Mammary epithelial cell (primary cell): ENCODE measurements at regions of chr7 and their contacts with region 1.

Region 1: DNA sequence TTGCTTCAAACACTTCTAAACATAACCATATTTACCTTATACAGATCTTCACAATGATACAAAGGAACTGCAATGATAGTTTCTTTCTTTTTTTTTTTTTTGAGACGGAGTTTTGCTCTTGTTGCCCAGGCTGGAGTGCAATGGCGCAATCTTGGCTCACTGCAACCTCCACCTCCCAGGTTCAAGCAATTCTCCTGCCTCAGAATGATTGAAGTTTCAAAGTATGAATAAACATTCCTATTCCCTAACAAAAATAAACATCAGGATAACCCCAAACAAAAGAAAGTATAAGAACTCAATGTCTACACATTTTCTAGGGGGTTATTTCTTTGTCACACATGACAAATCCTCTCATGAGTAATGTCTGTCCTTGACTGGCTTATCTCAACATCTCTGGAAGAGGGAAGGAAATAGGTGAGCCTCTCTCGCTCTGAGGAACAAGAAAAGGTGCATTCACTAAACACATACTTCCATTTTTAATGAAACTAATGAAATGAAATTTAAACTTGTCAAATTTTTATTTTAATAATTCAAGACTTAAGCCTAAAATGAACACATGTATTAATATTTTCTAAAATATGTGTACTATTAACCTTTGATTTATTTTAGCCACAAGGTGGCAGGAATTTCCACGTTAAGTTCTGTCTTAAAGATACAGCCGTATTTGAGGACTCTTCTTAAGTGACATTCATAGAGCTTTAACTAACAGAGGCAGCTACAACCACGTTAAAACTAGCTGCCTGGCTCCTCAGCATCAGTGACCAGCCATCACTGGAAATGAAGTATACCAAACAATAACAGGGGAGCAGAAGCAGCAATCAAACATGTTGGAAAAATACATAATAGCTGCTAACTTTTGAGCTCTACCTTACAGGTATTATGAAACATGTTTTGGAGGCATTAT is 58.3 kb downstream of the MALSU1 start:
- DNase-seq: peak; percentile 81
- H3K4me3 ChIP-seq: peak overlapping the region in 1 of 3 experiments; percentile 15
- H3K27ac ChIP-seq: peak overlapping the region; percentile 15
- H3K4me1 ChIP-seq: peaks cover 22% of the 10 kb centered on the region
- H3K27me3 ChIP-seq: no peaks in the 10 kb centered on the region
- CTCF ChIP-seq: peak; percentile 28 to 40

Region 2: GRCh38 chr7:23334482-23335056 is 22.9 kb before region 1 on chr7:
- CTCF ChIA-PET with region 1: no interaction called
- dilution Hi-C with region 1: no loop called
- in situ Hi-C with region 1: no loop called
- intact Hi-C with region 1: loop called (anchors 1 kb)
- DNase-seq: peak; percentile 97
- H3K4me3 ChIP-seq: no peak overlapping the region
- H3K27ac ChIP-seq: peak overlapping the region; percentile 6
- H3K4me1 ChIP-seq: peaks cover 30% of the 10 kb centered on the region
- H3K27me3 ChIP-seq: no peaks in the 10 kb centered on the region
- CTCF ChIP-seq: no peak

Region 3: GRCh38 chr7:23462846-23463245 is 105.4 kb after region 1 on chr7:
- CTCF ChIA-PET with region 1: interaction called, 12 read pairs
- dilution Hi-C with region 1: no loop called
- in situ Hi-C with region 1: no loop called
- intact Hi-C with region 1: loop called (anchors 1 kb)
- DNase-seq: no peak
- H3K4me3 ChIP-seq: no peak overlapping the region
- H3K27ac ChIP-seq: no peak overlapping the region
- H3K4me1 ChIP-seq: no peaks in the 10 kb centered on the region
- H3K27me3 ChIP-seq: peaks cover 9% of the 10 kb centered on the region
- CTCF ChIP-seq: peak; percentile 2 to 54

Region 4: DNA sequence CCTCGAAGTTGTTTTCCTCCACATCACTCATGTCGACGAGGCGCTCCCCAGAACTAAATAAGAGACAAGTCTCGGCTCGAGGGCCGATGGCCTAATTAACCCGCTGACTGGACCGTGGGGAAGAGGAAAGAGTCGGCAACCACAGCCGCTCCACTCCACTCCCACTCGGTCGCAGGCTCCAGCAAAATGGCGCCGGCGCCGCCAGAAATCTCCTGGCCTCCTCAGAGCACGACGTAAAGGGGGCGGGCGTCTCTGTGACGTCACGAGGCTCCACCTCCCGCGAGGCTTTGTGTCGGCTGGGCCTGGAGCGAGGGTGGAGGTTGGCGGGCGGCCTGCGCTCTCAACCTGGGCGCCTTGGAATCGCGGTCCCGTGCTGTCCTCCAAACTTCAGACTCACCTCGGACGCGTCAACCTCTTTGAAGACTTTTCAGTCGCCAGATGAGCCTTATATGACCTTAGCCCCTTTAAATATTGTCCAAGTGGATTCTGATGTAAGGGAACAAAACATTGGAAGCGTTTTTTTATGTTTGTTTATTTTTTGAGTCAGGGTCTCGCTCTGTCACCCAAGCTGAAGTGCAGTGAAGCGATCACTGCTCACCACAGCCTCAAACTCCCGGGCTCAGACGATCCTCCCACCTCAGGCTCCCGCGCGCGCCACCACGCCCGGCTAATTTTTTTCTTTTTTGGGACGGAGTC is 174.5 kb after region 1 on chr7 and contains the start of gene TRA2A:
- CTCF ChIA-PET with region 1: no interaction called
- dilution Hi-C with region 1: no loop called
- in situ Hi-C with region 1: no loop called
- intact Hi-C with region 1: loop called (anchors 5 kb)
- DNase-seq: peak; percentile 90
- H3K4me3 ChIP-seq: peak within 1 kb of the TSS; percentile 79 to 94 (median 90)
- H3K27ac ChIP-seq: peak within 1 kb of the TSS; percentile 99
- H3K4me1 ChIP-seq: peaks cover 9% of the 10 kb centered on the region
- H3K27me3 ChIP-seq: no peaks in the 10 kb centered on the region
- CTCF ChIP-seq: no peak
- total RNA-seq, gene TRA2A: 25.5 to 95.2 TPM

Region 5: GRCh38 chr7:23604296-23604640 is 246.8 kb after region 1 on chr7:
- CTCF ChIA-PET with region 1: no interaction called
- dilution Hi-C with region 1: no loop called
- in situ Hi-C with region 1: no loop called
- intact Hi-C with region 1: no loop called
- DNase-seq: no peak
- H3K4me3 ChIP-seq: no peak overlapping the region
- H3K27ac ChIP-seq: no peak overlapping the region
- H3K4me1 ChIP-seq: no peaks in the 10 kb centered on the region
- H3K27me3 ChIP-seq: no peaks in the 10 kb centered on the region
- CTCF ChIP-seq: no peak